Mammary epithelial cell (primary cell): ENCODE measurements at regions of chr5 and their contacts with region 1.

Region 1: GRCh38 chr5:140557136-140557805 is at the start of gene SRA1:
- DNase-seq: peak; percentile 87
- H3K4me3 ChIP-seq: peak within 1 kb of the TSS; percentile 85 to 88 (median 86)
- H3K27ac ChIP-seq: peak within 1 kb of the TSS; percentile 75
- H3K4me1 ChIP-seq: peaks cover 28% of the 10 kb centered on the region
- H3K27me3 ChIP-seq: no peaks in the 10 kb centered on the region
- CTCF ChIP-seq: no peak
- total RNA-seq, gene SRA1: 20.8 to 47.7 TPM

Region 2: GRCh38 chr5:140207250-140207964 is 349.9 kb before region 1 on chr5:
- CTCF ChIA-PET with region 1: no interaction called
- dilution Hi-C with region 1: no loop called
- in situ Hi-C with region 1: no loop called
- intact Hi-C with region 1: no loop called
- DNase-seq: no peak
- H3K4me3 ChIP-seq: no peak overlapping the region
- H3K27ac ChIP-seq: no peak overlapping the region
- H3K4me1 ChIP-seq: no peaks in the 10 kb centered on the region
- H3K27me3 ChIP-seq: no peaks in the 10 kb centered on the region
- CTCF ChIP-seq: no peak

Region 3: GRCh38 chr5:140710899-140711552 is 153.8 kb after region 1 on chr5:
- CTCF ChIA-PET with region 1: no interaction called
- dilution Hi-C with region 1: no loop called
- in situ Hi-C with region 1: no loop called
- intact Hi-C with region 1: loop called (anchors 5 kb)
- DNase-seq: peak; percentile 97
- H3K4me3 ChIP-seq: peak overlapping the region; percentile 48 to 55 (median 50)
- H3K27ac ChIP-seq: peak overlapping the region; percentile 67
- H3K4me1 ChIP-seq: no peaks in the 10 kb centered on the region
- H3K27me3 ChIP-seq: no peaks in the 10 kb centered on the region
- CTCF ChIP-seq: no peak